Transverse colon (tissue), 4 donors: ENCODE measurements at regions of chr2 and their contacts with region 1.

Region 1: DNA sequence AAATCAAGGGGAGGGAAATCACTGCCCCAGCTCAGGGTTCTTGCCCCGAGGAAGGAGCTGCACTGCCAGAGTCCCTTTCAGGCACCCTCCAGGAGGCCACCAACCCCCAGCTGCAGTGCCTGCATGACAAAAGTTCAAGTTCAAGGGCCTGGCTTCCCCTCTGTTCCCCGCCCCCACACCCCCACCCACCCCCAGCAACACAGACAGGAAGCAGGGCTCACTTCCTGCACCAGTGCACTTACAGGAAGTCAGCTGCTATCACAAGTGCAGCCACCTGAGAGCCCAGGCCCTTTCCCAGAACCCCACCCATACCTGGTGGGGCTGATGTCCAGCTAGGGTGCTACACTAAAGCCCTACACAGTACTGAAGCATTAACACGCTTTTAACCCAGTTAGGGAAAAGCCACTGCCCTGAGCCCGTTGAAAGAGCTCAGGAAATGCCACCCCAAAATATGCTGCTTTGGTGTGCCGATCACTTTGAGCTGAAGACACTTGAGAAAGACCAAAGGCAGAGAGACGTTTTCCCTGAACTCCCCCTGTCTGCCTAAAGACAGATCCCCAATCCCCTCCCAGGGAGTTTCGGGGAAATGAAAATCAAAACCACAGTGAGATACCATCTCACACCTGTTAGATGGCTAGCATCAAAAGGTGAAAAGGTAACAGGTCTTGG is 109.9 kb upstream of the CAB39 start:
- DNase-seq: peak; percentile 51
- H3K4me3 ChIP-seq: no peak overlapping the region
- H3K27ac ChIP-seq: peak overlapping the region; percentile 14 to 55 (median 34)
- H3K4me1 ChIP-seq: no peaks in the 10 kb centered on the region
- H3K27me3 ChIP-seq: no peaks in the 10 kb centered on the region
- CTCF ChIP-seq: no peak
- EP300 ChIP-seq: no peak
- POLR2A ChIP-seq: no peak

Region 2: GRCh38 chr2:230219419-230220331 is 383.0 kb before region 1 on chr2 and contains the start of gene SP110:
- in situ Hi-C with region 1: loop called in 2 of 4 experiments (anchors 25 kb)
- intact Hi-C with region 1: no loop called
- DNase-seq: peak; percentile 86
- H3K4me3 ChIP-seq: peak within 1 kb of the TSS; percentile 47 to 81 (median 66)
- H3K27ac ChIP-seq: peak within 1 kb of the TSS; percentile 77 to 87 (median 86)
- H3K4me1 ChIP-seq: peaks cover 0 to 22% (median 10%) of the 10 kb centered on the region in 4 donors
- H3K27me3 ChIP-seq: no peaks in the 10 kb centered on the region
- CTCF ChIP-seq: no peak
- EP300 ChIP-seq: no peak
- POLR2A ChIP-seq: peak; percentile 63
- total RNA-seq, gene SP110: 15.0 to 38.4 (median 29.5) TPM